Left colon (tissue), 2 donors: ENCODE measurements at regions of chr17 and their contacts with region 1.

Region 1: GRCh38 chr17:68777243-68777855 is 176.2 kb upstream of the FAM20A start:
- DNase-seq: peak in 1 of 2 donors; percentile 41
- ATAC-seq: peak; percentile 83

Region 2: GRCh38 chr17:68640242-68640989 is 136.9 kb before region 1 on chr17:
- intact Hi-C with region 1: no loop called
- DNase-seq: no peak
- ATAC-seq: no peak

Region 3: GRCh38 chr17:68821860-68822696 is 44.7 kb after region 1 on chr17:
- intact Hi-C with region 1: no loop called
- DNase-seq: no peak
- ATAC-seq: no peak

Region 4: DNA sequence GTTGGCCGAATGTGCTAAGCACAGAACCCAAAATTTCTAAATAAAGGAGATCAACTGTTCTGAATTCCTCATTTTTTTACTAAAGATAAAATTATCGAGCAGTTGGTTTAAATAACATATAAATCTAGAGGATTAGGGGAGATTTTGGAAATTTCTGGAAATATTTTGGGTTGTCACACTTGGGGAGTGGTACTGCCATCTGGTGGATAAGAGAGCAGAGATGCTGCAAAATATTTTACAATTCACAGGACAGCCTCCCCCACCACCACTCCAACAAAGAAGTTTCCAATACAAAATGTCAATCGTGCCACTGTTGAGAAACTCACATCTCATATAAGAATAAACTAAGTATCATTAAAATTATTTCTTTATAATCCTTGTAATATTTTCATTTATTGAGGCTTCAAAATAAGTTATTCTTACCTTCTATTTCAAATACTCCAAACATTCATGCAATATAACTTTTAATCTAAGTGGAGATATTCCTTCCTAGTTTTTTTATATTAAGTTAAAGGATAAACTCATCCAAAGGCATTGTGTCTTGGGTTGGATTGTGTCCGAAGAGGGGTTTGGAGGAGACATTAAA is 194.9 kb after region 1 on chr17:
- intact Hi-C with region 1: loop called in 1 of 2 experiments (anchors 5 kb)
- DNase-seq: no peak
- ATAC-seq: no peak

Region 5: GRCh38 chr17:69239611-69240600 is 462.6 kb after region 1 on chr17:
- intact Hi-C with region 1: loop called in 1 of 2 experiments (anchors 5 kb)
- DNase-seq: no peak
- ATAC-seq: no peak